Prostate gland (tissue), 2 donors: ENCODE measurements at regions of chr1 and their contacts with region 1.

Region 1: DNA sequence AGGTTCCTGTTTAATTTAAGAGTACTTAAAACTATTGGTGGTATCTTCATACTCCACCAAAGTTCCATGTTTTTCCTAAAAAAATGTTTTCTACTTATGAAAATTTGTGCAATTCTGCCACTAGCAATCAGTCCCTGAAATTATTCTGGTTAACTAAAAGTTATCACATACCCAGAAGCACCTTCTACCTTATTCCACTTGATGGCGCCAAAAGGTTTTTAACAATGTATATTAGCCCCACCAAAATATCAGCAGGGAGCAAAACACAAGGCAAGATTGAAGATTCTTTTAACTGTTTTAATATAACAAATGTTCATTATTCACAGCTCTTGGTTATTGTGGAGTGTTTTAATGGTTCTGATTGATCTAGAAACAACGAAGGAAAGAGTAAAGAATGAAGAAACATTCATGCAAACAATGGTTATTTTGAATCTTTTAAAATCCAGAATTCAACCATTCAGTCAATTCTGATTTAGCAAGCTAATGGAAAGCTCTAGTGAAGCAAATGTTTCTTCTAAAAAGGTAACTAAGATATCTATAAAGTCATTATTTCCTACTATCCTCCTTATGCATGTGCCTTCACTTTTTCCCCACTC is 67.2 kb downstream of the TTLL7 start:
- DNase-seq: peak; percentile 32
- H3K4me3 ChIP-seq: no peak overlapping the region
- H3K27ac ChIP-seq: no peak overlapping the region
- H3K4me1 ChIP-seq: no peaks in the 10 kb centered on the region
- H3K27me3 ChIP-seq: no peaks in the 10 kb centered on the region
- CTCF ChIP-seq: peak; percentile 23 to 89 (median 74)
- POLR2A ChIP-seq: no peak

Region 2: GRCh38 chr1:83615370-83615769 is 316.4 kb before region 1 on chr1:
- intact Hi-C with region 1: no loop called
- DNase-seq: no peak
- H3K4me3 ChIP-seq: no peak overlapping the region
- H3K27ac ChIP-seq: no peak overlapping the region
- H3K4me1 ChIP-seq: no peaks in the 10 kb centered on the region
- H3K27me3 ChIP-seq: no peaks in the 10 kb centered on the region
- CTCF ChIP-seq: no peak
- POLR2A ChIP-seq: no peak

Region 3: DNA sequence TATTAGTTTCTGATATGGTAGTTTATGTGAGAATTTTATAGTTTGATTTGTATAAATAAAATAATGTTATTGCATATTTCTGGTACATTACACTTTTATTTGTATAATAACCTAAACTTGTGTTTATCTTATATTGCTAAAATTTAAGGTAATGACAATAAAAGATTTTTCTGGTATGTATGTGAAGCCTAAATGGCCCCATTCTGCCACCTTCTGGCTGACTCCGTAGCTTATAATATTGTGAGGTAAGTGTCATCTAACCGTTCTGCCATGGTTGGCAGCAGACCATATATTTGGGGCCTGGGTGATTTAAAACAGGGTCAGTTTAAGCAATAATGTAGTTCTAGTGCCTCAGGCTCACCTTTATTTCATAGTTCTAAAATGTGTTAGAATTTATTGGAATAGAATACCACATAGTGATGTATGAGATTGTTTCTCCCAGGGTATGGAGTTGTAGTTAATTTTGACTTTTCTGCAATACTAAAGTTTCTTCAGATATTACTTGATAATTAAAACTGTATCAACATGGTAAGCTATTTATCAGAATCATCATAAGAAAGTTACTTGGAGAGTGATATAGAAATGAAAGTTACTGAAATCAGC is 191.1 kb after region 1 on chr1:
- intact Hi-C with region 1: loop called (anchors 5 kb)
- DNase-seq: peak; percentile 48
- H3K4me3 ChIP-seq: no peak overlapping the region
- H3K27ac ChIP-seq: no peak overlapping the region
- H3K4me1 ChIP-seq: no peaks in the 10 kb centered on the region
- H3K27me3 ChIP-seq: no peaks in the 10 kb centered on the region
- CTCF ChIP-seq: peak; percentile 29 to 72 (median 58)
- POLR2A ChIP-seq: no peak

Region 4: GRCh38 chr1:84433258-84434080 is 501.7 kb after region 1 on chr1:
- intact Hi-C with region 1: loop called (anchors 5 kb)
- DNase-seq: peak; percentile 63
- H3K4me3 ChIP-seq: peak overlapping the region; percentile 2 to 3
- H3K27ac ChIP-seq: peak overlapping the region; percentile 15 to 53
- H3K4me1 ChIP-seq: no peaks in the 10 kb centered on the region
- H3K27me3 ChIP-seq: no peaks in the 10 kb centered on the region
- CTCF ChIP-seq: peak; percentile 45 to 89 (median 75)
- POLR2A ChIP-seq: no peak

Region 5: DNA sequence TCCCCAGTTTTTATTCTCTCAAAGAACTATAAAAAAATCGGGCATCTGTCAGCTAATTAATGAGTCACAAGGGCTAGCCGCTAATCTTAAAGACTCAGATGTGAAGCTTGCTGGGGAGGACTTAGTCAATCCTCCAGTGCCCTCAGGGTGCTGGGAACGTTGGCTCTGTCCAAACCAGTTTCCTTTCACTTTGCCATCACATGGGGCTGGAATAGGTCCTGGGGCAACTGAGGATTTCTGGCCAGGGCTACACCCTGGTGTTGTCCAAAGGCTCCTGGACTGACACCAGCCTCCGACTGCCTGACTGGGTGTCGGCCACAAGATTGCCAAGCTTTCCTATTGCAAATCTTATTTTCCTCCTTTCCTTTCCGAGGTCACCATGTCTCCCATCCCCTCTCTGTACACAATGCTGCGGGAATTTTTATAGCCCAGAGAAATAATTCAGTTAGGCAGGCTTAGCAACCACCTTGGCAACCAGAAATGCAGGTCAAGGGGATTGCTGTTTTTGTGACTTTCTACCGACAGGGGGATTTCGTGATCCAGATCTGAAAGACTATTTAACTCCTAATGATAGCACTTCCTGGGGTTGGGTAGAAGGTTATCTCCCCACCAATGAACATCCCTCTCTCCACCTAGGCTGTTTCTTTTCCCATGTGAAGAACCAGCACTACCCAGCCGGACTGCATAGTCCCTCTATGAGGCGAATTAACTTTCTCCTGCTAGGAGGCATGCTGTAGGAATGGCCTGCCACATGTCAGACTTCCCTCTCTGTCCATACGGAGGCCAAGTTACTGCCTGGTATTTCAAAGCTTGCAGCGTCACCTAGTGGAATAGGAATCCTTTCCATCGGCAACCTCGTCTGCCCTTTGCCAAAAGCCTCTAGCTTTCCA is 672.4 kb after region 1 on chr1:
- intact Hi-C with region 1: loop called (anchors 10 kb)
- DNase-seq: peak; percentile 61
- H3K4me3 ChIP-seq: peak overlapping the region; percentile 17 to 18
- H3K27ac ChIP-seq: peak overlapping the region; percentile 66 to 72
- H3K4me1 ChIP-seq: no peaks in the 10 kb centered on the region
- H3K27me3 ChIP-seq: no peaks in the 10 kb centered on the region
- CTCF ChIP-seq: peak in 2 of 4 experiments; percentile 50 to 53
- POLR2A ChIP-seq: no peak

Region 6: GRCh38 chr1:84772428-84772943 is 840.7 kb after region 1 on chr1:
- intact Hi-C with region 1: loop called (anchors 10 kb)
- DNase-seq: peak; percentile 89
- H3K4me3 ChIP-seq: no peak overlapping the region
- H3K27ac ChIP-seq: peak overlapping the region in 1 of 2 donors; percentile 59
- H3K4me1 ChIP-seq: peaks cover 5% of the 10 kb centered on the region
- H3K27me3 ChIP-seq: no peaks in the 10 kb centered on the region
- CTCF ChIP-seq: peak; percentile 90 to 93 (median 91)
- POLR2A ChIP-seq: no peak